HepG2 (cell line): ENCODE measurements at regions of chr6 and their contacts with region 1.

Region 1: GRCh38 chr6:27078734-27079357 is 168.7 kb upstream of the PRSS16 start:
- DNase-seq: peak; percentile 75
- ATAC-seq: peak; percentile 96
- H3K4me3 ChIP-seq: peak overlapping the region; percentile 18 to 52 (median 19); a peak in 4 of 6 replicates
- H3K27ac ChIP-seq: no peak overlapping the region
- H3K4me1 ChIP-seq: peaks cover 28% of the 10 kb centered on the region
- H3K27me3 ChIP-seq: no peaks in the 10 kb centered on the region
- CTCF ChIP-seq: peak; percentile 92
- EP300 ChIP-seq: no peak
- POLR2A ChIP-seq: no peak
- RAD21 ChIP-seq: peak; percentile 85

Region 2: GRCh38 chr6:26613689-26614683 is 464.9 kb before region 1 on chr6:
- CTCF ChIA-PET with region 1: interaction called, 66 read pairs
- POLR2A ChIA-PET with region 1: no interaction called
- in situ Hi-C with region 1: loop called (anchors 5 kb)
- intact Hi-C with region 1: no loop called
- DNase-seq: no peak
- ATAC-seq: peak; percentile 85
- H3K4me3 ChIP-seq: peak overlapping the region; percentile 39 to 62 (median 47); a peak in 4 of 6 replicates
- H3K27ac ChIP-seq: no peak overlapping the region
- H3K4me1 ChIP-seq: no peaks in the 10 kb centered on the region
- H3K27me3 ChIP-seq: peaks cover 4 to 19% of the 10 kb centered on the region in 2 experiments; a peak in 4 of 5 replicates
- CTCF ChIP-seq: no peak; the same call in 1 of the 2 replicates
- EP300 ChIP-seq: no peak
- POLR2A ChIP-seq: no peak
- RAD21 ChIP-seq: no peak

Region 3: DNA sequence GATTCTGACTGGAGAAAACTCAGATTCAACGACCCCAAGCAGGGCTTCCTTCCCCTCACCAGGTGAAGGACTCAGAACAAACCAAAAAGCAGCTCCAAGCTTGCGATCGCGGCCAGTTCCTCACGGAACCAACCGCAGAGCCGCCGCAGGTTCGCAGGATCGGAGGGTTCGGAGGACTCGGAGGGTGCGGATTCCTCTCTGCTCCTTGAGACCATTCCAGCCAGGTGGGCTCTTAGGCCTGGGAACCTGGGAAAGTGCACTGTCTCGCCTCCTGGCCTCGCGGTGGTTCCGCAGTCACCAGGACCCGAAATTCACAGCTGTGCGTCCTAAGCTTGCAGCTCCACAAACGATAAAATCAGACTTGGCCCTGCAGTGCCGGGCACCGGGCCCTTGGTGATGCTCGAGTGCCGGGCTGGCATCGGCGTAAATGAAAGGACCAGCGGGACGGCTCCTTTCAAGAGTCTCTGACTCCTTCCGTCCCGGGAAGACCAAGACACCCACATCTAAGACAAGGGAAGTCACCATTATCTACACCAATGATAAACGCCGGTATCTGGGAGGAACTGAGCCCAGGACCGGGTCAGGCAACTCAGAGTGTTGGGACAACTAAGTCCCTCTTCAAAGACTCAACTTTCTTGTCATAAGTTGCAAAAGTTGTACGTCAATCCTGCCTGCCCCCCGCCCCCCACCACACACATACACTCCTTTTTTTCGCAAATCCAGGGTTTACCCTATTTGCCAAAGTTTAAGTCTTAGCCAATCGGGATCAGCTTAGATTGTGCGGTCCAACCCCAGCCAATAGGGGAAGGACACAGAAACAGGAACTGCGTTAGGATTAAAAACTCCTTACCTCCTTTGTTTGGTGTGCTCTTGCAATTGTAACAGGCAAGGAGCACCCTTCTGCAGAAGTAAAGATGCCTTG is 98.9 kb after region 1 on chr6:
- CTCF ChIA-PET with region 1: no interaction called
- POLR2A ChIA-PET with region 1: no interaction called
- in situ Hi-C with region 1: no loop called
- intact Hi-C with region 1: no loop called
- DNase-seq: peak; percentile 65
- ATAC-seq: peak; percentile 91
- H3K4me3 ChIP-seq: peak overlapping the region; percentile 86 to 100 (median 97)
- H3K27ac ChIP-seq: peak overlapping the region; percentile 50
- H3K4me1 ChIP-seq: peaks cover 18% of the 10 kb centered on the region
- H3K27me3 ChIP-seq: peaks cover 0 to 12% of the 10 kb centered on the region in 2 experiments; a peak in 2 of 5 replicates
- CTCF ChIP-seq: peak; percentile 58
- EP300 ChIP-seq: no peak
- POLR2A ChIP-seq: no peak
- RAD21 ChIP-seq: peak; percentile 61